Activated T-helper 1 cell treated with anti-CD3 and anti-CD28 coated beads, Interleukin-12 subunit alpha, Interleukin-12 subunit beta, Interleukin-2, Interleukin-4 antibody, amounts not matched to agents 30 ng/mL and 10 ng/mL and 1 ng/mL, durations not matched to agents 14 hours and 24 hours and 36 hours (primary cell): ENCODE measurements at regions of chr4 and their contacts with region 1.

Region 1: DNA sequence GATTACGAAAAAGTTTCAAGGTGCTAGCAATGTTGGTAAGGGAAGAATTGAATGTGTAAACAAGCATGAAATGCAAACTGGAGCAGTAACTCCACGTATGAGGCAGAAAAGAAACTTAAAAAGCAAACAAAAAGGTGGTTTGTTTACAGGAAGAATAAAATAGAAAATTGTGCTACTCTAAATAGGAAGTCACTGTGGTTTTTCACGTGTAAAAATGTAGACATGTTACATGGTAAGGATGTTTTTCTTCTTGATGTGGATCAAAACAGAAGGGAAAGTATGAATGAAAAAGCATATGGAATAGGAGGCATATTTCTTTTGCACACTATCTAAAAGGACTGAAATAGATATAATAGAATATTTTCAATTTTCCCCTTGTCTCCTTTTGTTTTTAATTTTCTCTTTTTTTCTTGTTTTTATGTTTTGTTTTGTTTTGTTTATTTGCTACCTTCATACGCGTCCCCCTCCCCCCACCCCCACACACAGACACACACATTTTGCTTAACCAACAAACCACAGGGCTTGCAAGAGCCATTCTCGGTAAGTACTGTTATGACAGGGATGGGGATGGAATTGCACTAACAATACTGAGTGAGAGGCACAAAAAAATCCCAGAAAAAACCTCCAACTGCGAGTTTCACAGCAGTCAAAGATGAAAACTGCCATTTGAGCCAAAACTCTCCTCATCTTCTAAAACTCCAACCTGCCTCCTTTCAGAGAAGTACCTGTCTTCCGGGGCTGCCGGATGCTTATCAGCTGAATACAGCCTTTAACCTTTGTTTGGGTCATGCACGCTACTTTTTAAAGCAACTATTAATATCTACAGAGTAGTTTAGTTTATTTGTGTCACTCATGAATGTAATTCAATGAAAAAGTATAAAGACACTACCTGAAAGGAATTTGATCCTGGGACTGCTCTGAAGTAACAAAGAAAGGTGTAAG is 135.8 kb downstream of the IL15 start:
- DNase-seq: peak; percentile 4
- H3K4me3 Mint-ChIP-seq: peak overlapping the region; percentile 56
- H3K27ac Mint-ChIP-seq: peak overlapping the region; percentile 44
- H3K4me1 Mint-ChIP-seq: peaks cover 22% of the 10 kb centered on the region
- H3K27me3 Mint-ChIP-seq: peaks cover 3% of the 10 kb centered on the region

Region 2: GRCh38 chr4:141636082-141636770 is 135.9 kb before region 1 on chr4 and contains the start of gene IL15:
- intact Hi-C with region 1: loop called (anchors 5 kb)
- DNase-seq: peak; percentile 70
- H3K4me3 Mint-ChIP-seq: peak within 1 kb of the TSS; percentile 96
- H3K27ac Mint-ChIP-seq: peak within 1 kb of the TSS; percentile 81
- H3K4me1 Mint-ChIP-seq: peaks cover 25% of the 10 kb centered on the region
- H3K27me3 Mint-ChIP-seq: peaks cover 20% of the 10 kb centered on the region
- total RNA-seq, gene IL15: 0.67 and 1.8 TPM in 2 replicates

Region 3: GRCh38 chr4:141711014-141711610 is 61.0 kb before region 1 on chr4:
- intact Hi-C with region 1: loop called (anchors 2 kb)
- DNase-seq: no peak
- H3K4me3 Mint-ChIP-seq: no peak overlapping the region
- H3K27ac Mint-ChIP-seq: no peak overlapping the region
- H3K4me1 Mint-ChIP-seq: peaks cover 2% of the 10 kb centered on the region
- H3K27me3 Mint-ChIP-seq: peaks cover 2% of the 10 kb centered on the region

Region 4: GRCh38 chr4:141797966-141798365 is 25.8 kb after region 1 on chr4:
- intact Hi-C with region 1: no loop called
- DNase-seq: no peak
- H3K4me3 Mint-ChIP-seq: no peak overlapping the region
- H3K27ac Mint-ChIP-seq: no peak overlapping the region
- H3K4me1 Mint-ChIP-seq: no peaks in the 10 kb centered on the region
- H3K27me3 Mint-ChIP-seq: no peaks in the 10 kb centered on the region

Region 5: DNA sequence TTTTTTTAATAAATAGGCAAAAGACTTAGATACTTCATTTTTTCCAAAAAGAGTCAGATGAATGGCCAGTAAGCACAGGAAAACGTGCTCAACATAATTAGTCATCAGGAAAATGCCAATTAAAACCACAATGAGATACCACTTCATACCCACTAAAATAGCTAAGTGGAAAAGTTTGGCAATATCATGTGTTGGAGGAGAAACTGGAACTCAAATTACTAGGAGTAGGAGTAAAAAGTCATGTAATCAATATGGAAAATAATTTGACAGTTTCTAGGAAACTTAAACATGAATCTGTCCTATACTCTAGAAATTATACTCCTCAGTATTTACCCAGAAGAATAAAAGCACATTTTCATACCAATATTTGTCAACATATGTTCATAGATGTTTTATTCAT is 624.1 kb after region 1 on chr4:
- intact Hi-C with region 1: loop called (anchors 2 kb)
- DNase-seq: no peak
- H3K4me3 Mint-ChIP-seq: peak overlapping the region; percentile 53
- H3K27ac Mint-ChIP-seq: peak overlapping the region; percentile 89
- H3K4me1 Mint-ChIP-seq: peaks cover 61% of the 10 kb centered on the region
- H3K27me3 Mint-ChIP-seq: no peaks in the 10 kb centered on the region